MCF 10A (cell line): ENCODE measurements at regions of chr5 and their contacts with region 1.

Region 1: GRCh38 chr5:62231576-62231975 is 74.4 kb upstream of the KIF2A start:
- DNase-seq: no peak
- H3K4me3 Mint-ChIP-seq: no peak overlapping the region
- H3K27ac Mint-ChIP-seq: no peak overlapping the region
- H3K4me1 Mint-ChIP-seq: peaks cover 6% of the 10 kb centered on the region
- H3K27me3 Mint-ChIP-seq: peaks cover 9% of the 10 kb centered on the region
- CTCF ChIP-seq: no peak

Region 2: DNA sequence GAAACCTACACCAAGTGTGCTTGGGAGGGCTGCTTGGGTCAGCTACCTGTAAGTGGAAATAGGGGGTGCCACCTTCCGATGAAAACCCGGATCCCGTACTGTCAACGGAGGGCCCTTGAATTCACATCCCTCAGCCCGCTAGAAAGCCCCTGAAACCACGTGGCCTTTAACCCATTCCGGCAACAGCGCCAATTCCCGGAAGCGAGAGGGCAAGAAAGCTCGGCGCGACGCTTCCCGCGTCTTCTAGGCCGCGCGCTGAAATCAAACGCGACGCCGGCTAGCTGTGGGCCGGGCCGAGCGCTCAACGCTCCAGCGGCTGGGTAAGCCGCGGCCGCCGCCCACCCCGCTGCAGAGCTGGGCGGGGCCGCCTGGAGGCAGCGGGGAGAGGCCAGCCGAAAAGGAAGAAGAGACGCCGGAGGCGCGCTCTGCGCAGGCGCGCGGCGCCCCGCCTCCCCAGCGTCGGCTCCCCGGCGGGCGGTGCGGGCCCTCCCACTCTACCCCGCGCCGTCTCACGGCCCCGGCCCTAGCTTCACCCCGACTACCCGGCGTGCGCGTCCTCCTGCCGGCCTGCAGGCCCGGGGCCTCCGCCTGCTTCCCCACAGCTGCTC is 74.2 kb after region 1 on chr5 and contains the start of gene KIF2A:
- CTCF ChIA-PET with region 1: interaction called, 3 read pairs
- POLR2A ChIA-PET with region 1: no interaction called
- intact Hi-C with region 1: loop called (anchors 10 kb)
- DNase-seq: peak; percentile 94
- H3K4me3 Mint-ChIP-seq: peak within 1 kb of the TSS; percentile 91
- H3K27ac Mint-ChIP-seq: peak within 1 kb of the TSS; percentile 93
- H3K4me1 Mint-ChIP-seq: peaks cover 13% of the 10 kb centered on the region
- H3K27me3 Mint-ChIP-seq: no peaks in the 10 kb centered on the region
- CTCF ChIP-seq: no peak
- total RNA-seq, gene KIF2A: 45.0 and 61.0 TPM in 2 replicates

Region 3: GRCh38 chr5:62354028-62354874 is 122.7 kb after region 1 on chr5:
- CTCF ChIA-PET with region 1: interaction called, 105 read pairs
- POLR2A ChIA-PET with region 1: no interaction called
- intact Hi-C with region 1: no loop called
- DNase-seq: peak; percentile 64
- H3K4me3 Mint-ChIP-seq: no peak overlapping the region
- H3K27ac Mint-ChIP-seq: no peak overlapping the region
- H3K4me1 Mint-ChIP-seq: no peaks in the 10 kb centered on the region
- H3K27me3 Mint-ChIP-seq: no peaks in the 10 kb centered on the region
- CTCF ChIP-seq: peak; percentile 50